Dorsolateral prefrontal cortex (tissue), 120 donors: ENCODE measurements at regions of chr2 and their contacts with region 1.

Region 1: GRCh38 chr2:232444409-232445148 is 11.4 kb upstream of the ALPI start:
- DNase-seq: peak in 3 of 10 donors; percentile 13 to 46 (median 36)
- H3K4me3 ChIP-seq: no peak overlapping the region
- H3K27ac ChIP-seq: no peak overlapping the region
- H3K27me3 ChIP-seq: no peaks in the 10 kb centered on the region
- CTCF ChIP-seq: peak in 51 of 56 donors; percentile 12 to 60 (median 42)

Region 2: GRCh38 chr2:232339121-232340081 is 105.2 kb before region 1 on chr2:
- intact Hi-C with region 1: loop called (anchors 5 to 10 kb)
- DNase-seq: peak in 5 of 10 donors; percentile 24 to 37 (median 36)
- H3K4me3 ChIP-seq: no peak overlapping the region
- H3K27ac ChIP-seq: no peak overlapping the region
- H3K27me3 ChIP-seq: no peaks in the 10 kb centered on the region
- CTCF ChIP-seq: no peak

Region 3: DNA sequence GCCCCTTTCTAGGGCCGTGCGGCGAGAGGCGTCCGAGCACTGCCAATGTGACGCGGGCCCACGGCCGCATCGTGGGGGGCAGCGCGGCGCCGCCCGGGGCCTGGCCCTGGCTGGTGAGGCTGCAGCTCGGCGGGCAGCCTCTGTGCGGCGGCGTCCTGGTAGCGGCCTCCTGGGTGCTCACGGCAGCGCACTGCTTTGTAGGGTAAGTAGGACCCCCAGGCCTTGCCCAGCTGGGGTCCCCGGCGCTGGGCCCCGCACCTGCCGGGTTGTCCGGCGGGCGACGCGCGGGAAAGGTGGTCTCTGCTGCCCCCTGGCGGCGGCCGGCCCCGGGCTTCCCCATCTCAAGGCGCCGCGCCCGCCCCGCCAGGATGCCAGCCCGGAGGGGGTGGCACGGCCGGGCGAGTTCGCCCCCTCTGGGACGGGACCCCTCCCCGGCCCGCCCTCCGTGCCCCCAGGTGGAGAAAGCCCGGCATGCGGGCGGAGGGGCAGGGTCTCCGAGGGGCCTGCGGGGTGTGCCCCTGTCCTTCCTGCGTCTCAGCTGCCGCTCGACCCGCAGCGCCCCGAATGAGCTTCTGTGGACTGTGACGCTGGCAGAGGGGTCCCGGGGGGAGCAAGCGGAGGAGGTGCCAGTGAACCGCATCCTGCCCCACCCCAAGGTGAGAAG is 77.5 kb after region 1 on chr2:
- intact Hi-C with region 1: loop called (anchors 2 kb)
- DNase-seq: peak in 7 of 10 donors; percentile 32 to 77 (median 59)
- H3K4me3 ChIP-seq: peak overlapping the region; percentile 5 to 66 (median 47)
- H3K27ac ChIP-seq: peak overlapping the region in 1 of 59 donors; percentile 48
- H3K27me3 ChIP-seq: peaks cover 0 to 57% (median 29%) of the 10 kb centered on the region in 45 donors
- CTCF ChIP-seq: peak; percentile 72 to 99 (median 94)